ENCODE measurements at regions of chr21 and their contacts with region 1.

Region 1: DNA sequence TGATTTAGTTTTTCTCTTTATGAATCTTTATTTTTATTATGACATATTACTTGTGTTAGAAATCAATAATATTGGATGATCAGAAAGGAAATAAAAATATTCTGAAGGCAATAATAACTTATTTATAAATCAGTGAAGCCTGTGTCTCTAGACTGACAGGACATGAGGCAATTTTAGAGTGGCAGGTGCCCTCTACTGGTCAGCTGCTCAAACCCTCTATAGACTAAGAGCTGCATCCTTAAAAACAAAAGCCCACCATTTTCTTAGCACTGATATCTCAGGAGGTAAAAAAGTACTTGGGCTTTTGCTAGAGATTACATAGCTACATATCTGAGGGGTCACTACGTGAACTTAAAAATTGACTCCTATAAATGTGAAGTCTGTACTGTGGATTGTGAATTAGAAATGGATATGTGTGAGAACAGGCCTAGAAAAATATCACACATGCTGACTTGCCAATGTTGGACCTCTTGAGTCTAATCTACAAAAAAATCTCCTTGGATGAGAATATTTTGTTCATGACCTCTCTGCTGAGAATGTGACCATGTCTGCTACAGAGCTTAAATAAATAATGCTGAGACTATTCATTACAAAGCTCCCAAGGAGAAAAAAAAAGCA is 597.9 kb upstream of the ADAMTS5 start:
- H3K4me3 ChIP-seq: no peak overlapping the region
- H3K27ac ChIP-seq: no peak overlapping the region
- H3K4me1 ChIP-seq: no peaks in the 10 kb centered on the region
- CTCF ChIP-seq: no peak

Region 2: GRCh38 chr21:26850108-26850643 is 714.6 kb before region 1 on chr21:
- CTCF ChIA-PET with region 1: interaction called, 24 read pairs
- POLR2A ChIA-PET with region 1: no interaction called
- H3K4me3 ChIP-seq: no peak overlapping the region
- H3K27ac ChIP-seq: no peak overlapping the region
- H3K4me1 ChIP-seq: no peaks in the 10 kb centered on the region; the same call in 1 of the 2 replicates
- CTCF ChIP-seq: peak; percentile 42; the same call in 1 of the 2 replicates

Region 3: DNA sequence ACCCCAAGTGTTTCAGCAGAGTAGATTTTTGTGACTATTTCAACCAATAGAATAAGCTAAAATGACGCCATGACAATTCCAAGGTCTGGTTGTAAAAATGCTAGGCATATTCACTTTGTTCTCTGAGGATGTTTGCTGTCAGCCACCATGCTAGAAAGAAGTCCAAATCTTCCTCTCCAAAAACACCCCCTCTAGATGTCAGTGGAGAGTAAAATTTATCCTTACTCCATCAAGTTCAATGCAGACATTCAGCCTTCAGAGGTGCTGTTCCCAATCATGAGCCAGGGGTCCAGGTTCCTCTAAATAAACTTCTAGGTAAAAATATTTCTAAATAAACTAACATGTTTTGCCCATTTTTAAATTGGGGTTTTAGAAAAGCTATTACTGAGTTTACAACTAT is 202.5 kb before region 1 on chr21:
- CTCF ChIA-PET with region 1: interaction called, 13 read pairs
- POLR2A ChIA-PET with region 1: no interaction called
- H3K4me3 ChIP-seq: no peak overlapping the region
- H3K27ac ChIP-seq: no peak overlapping the region
- H3K4me1 ChIP-seq: no peaks in the 10 kb centered on the region
- CTCF ChIP-seq: no peak

Region 4: DNA sequence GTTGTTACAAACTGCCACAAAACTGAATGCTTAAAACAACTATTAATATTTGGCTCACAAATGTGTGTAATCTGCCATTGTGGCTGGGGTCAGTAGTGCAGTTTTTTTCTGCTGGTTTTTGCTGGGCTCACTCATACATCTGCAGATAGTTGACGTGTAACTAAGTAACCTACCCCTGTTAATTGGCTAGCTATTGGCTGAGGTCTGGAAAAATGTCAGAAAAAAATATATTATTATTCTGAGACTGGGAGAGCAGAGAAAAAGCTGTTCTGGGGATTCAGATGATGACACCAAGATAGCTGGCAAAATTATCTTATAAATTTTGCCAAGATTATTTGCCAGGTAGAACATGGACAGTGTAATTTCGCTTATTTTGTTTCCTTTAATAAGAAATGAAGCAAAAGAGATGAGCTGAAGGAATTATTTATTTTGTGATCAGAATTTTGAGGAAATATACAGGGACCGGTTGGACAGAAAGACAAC is 18.2 kb after region 1 on chr21:
- CTCF ChIA-PET with region 1: interaction called, 12 read pairs
- POLR2A ChIA-PET with region 1: no interaction called
- H3K4me3 ChIP-seq: no peak overlapping the region
- H3K27ac ChIP-seq: no peak overlapping the region
- H3K4me1 ChIP-seq: no peaks in the 10 kb centered on the region
- CTCF ChIP-seq: no peak

Region 5: GRCh38 chr21:27648560-27648959 is 83.8 kb after region 1 on chr21:
- CTCF ChIA-PET with region 1: no interaction called
- POLR2A ChIA-PET with region 1: no interaction called
- H3K4me3 ChIP-seq: no peak overlapping the region
- H3K27ac ChIP-seq: no peak overlapping the region
- H3K4me1 ChIP-seq: no peaks in the 10 kb centered on the region
- CTCF ChIP-seq: no peak

Region 6: GRCh38 chr21:27700974-27701614 is 136.3 kb after region 1 on chr21:
- CTCF ChIA-PET with region 1: interaction called, 12 read pairs
- POLR2A ChIA-PET with region 1: no interaction called
- H3K4me3 ChIP-seq: no peak overlapping the region; the same call in 1 of the 2 replicates
- H3K27ac ChIP-seq: no peak overlapping the region
- H3K4me1 ChIP-seq: no peaks in the 10 kb centered on the region
- CTCF ChIP-seq: peak; percentile 60